Activated T-helper 1 cell treated with anti-CD3 and anti-CD28 coated beads, Interleukin-12 subunit alpha, Interleukin-12 subunit beta, Interleukin-2, Interleukin-4 antibody, amounts not matched to agents 30 ng/mL and 10 ng/mL and 1 ng/mL, durations not matched to agents 14 hours and 24 hours and 36 hours (primary cell): ENCODE measurements at regions of chr16 and their contacts with region 1.

Region 1: GRCh38 chr16:381789-382717 is at the start of gene PGAP6:
- DNase-seq: peak; percentile 55
- H3K4me3 Mint-ChIP-seq: peak within 1 kb of the TSS; percentile 82
- H3K27ac Mint-ChIP-seq: peak within 1 kb of the TSS; percentile 58
- H3K4me1 Mint-ChIP-seq: peaks cover 7% of the 10 kb centered on the region
- H3K27me3 Mint-ChIP-seq: peaks cover 14% of the 10 kb centered on the region
- total RNA-seq, gene PGAP6: 35.7 and 36.3 TPM in 2 replicates

Region 2: DNA sequence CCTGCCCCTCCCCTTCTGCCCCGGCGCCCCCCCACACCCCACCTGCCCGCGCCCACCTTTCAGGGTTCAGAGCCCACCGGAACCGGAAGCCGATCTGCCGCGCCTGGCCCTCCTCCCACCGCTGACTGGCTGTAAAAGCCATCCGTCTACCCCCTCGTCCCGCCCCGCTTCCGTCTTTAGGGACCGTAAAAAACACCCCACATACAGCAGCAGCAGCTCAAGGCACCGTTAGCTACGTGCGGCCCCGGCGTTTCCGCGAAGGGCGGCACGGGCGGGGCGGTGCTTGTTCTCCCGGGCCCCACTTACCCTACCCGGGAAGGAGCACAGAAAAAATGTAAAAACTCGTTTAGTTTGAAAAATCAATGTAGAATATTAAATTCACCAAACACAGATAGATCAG is 11.6 kb before region 1 on chr16 and contains the start of gene MRPL28:
- intact Hi-C with region 1: loop called (anchors 1 kb)
- DNase-seq: peak; percentile 92
- H3K4me3 Mint-ChIP-seq: peak within 1 kb of the TSS; percentile 86
- H3K27ac Mint-ChIP-seq: peak within 1 kb of the TSS; percentile 84
- H3K4me1 Mint-ChIP-seq: peaks cover 4% of the 10 kb centered on the region
- H3K27me3 Mint-ChIP-seq: no peaks in the 10 kb centered on the region
- total RNA-seq, gene MRPL28: 110 and 115 TPM in 2 replicates

Region 3: DNA sequence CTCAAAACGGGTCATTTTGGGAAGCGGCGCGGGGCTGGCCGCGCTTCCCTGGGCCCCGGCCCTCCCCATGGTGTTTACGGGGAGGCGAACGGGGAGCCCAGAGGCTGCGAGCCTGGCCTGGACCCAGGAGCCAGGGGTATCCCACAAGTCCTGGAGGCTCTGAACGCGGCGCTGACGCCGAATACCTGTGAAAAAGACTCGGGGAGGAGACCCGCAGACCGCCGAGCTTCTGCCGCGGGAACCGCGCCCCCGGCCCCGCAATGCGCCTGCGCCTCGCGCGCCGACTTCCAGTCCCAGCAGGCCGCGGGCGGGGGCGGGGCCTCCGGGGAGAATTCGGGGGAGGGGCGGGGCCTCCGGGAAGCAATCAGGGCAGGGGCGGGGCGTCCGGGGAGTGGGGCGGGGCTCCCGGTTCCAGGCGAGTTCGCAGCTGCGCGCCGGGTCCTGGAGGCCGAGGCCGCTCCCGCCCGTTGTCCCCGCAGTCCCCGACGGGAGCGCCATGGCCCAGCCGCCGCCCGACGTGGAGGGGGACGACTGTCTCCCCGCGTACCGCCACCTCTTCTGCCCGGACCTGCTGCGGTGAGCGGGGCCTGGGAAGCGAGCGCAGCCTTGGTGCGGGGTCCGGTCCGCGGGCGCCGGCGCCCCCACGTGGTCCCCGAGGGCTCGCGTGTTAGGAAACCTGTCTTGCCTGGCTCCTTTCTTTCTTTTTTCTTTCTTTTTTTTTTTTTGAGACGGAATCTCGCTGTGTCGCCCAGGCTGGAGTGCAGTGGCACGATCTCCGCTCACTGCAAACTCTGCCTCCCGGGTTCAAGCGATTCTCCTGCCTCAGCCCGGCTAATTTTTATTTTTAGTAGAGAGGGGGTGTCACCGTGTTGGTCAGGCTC is 19.7 kb after region 1 on chr16 and contains the start of gene DECR2:
- intact Hi-C with region 1: loop called (anchors 1 kb)
- DNase-seq: peak; percentile 90
- H3K4me3 Mint-ChIP-seq: peak within 1 kb of the TSS; percentile 87
- H3K27ac Mint-ChIP-seq: peak within 1 kb of the TSS; percentile 58
- H3K4me1 Mint-ChIP-seq: peaks cover 11% of the 10 kb centered on the region
- H3K27me3 Mint-ChIP-seq: peaks cover 2% of the 10 kb centered on the region
- total RNA-seq, gene DECR2: 18.0 and 20.1 TPM in 2 replicates

Region 4: GRCh38 chr16:425082-425718 is 43.1 kb after region 1 on chr16 and contains the start of gene RAB11FIP3:
- intact Hi-C with region 1: loop called (anchors 1 kb)
- DNase-seq: peak; percentile 83
- H3K4me3 Mint-ChIP-seq: peak within 1 kb of the TSS; percentile 84
- H3K27ac Mint-ChIP-seq: peak within 1 kb of the TSS; percentile 88
- H3K4me1 Mint-ChIP-seq: peaks cover 32% of the 10 kb centered on the region
- H3K27me3 Mint-ChIP-seq: peaks cover 16% of the 10 kb centered on the region
- total RNA-seq, gene RAB11FIP3: 41.4 and 47.5 TPM in 2 replicates

Region 5: GRCh38 chr16:477758-478157 is 95.7 kb after region 1 on chr16:
- intact Hi-C with region 1: no loop called
- DNase-seq: no peak
- H3K4me3 Mint-ChIP-seq: no peak overlapping the region
- H3K27ac Mint-ChIP-seq: no peak overlapping the region
- H3K4me1 Mint-ChIP-seq: no peaks in the 10 kb centered on the region
- H3K27me3 Mint-ChIP-seq: no peaks in the 10 kb centered on the region

Region 6: GRCh38 chr16:1002399-1003161 is 620.5 kb after region 1 on chr16:
- intact Hi-C with region 1: no loop called
- DNase-seq: peak; percentile 18
- H3K4me3 Mint-ChIP-seq: peak overlapping the region; percentile 30
- H3K27ac Mint-ChIP-seq: peak overlapping the region; percentile 61
- H3K4me1 Mint-ChIP-seq: peaks cover 17% of the 10 kb centered on the region
- H3K27me3 Mint-ChIP-seq: peaks cover 21% of the 10 kb centered on the region